GM12878 (cell line): ENCODE measurements at regions of chr2 and their contacts with region 1.

Region 1: DNA sequence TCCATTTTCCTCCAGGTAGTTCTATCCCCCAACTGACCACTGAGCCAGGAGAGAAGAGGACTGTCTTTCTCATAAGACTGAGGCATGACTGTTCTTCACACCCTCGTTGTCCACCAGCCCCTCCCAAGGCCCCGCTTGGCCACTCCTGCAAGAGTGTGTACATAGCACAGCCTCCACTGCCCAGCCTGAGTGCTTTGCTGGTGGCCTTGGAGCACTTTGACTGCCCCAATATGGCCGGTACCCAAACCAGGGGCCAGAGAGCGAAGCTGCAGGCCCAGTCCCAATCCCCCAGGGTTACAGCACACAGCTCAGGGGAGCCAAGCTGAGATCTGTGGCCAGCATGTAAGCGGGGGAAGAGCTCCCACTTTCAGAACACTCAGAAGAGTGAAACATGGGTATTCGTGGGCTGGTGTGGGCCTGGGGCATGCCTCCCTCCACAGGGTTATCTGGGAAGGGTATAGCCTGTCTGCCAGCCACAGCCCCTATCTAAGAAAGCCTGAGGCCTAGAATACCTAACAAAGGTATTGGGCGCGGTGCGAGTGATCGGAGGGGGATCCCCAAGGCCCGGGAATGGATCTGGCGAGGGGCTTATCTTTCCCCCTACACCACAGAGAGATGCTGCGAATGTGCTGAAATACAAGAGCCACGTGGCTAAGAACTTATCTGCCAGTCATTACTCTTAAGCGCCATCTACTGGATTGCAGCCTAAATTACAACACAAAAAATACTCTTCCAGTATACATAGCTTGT is 163.8 kb downstream of the WDPCP start:
- DNase-seq: no peak
- ATAC-seq: peak; percentile 87
- H3K4me3 ChIP-seq: no peak overlapping the region
- H3K27ac ChIP-seq: no peak overlapping the region
- H3K4me1 ChIP-seq: no peaks in the 10 kb centered on the region
- H3K27me3 ChIP-seq: no peaks in the 10 kb centered on the region
- CTCF ChIP-seq: peak; percentile 43 to 66 (median 54)
- EP300 ChIP-seq: no peak
- POLR2A ChIP-seq: no peak
- RAD21 ChIP-seq: peak; percentile 79

Region 2: DNA sequence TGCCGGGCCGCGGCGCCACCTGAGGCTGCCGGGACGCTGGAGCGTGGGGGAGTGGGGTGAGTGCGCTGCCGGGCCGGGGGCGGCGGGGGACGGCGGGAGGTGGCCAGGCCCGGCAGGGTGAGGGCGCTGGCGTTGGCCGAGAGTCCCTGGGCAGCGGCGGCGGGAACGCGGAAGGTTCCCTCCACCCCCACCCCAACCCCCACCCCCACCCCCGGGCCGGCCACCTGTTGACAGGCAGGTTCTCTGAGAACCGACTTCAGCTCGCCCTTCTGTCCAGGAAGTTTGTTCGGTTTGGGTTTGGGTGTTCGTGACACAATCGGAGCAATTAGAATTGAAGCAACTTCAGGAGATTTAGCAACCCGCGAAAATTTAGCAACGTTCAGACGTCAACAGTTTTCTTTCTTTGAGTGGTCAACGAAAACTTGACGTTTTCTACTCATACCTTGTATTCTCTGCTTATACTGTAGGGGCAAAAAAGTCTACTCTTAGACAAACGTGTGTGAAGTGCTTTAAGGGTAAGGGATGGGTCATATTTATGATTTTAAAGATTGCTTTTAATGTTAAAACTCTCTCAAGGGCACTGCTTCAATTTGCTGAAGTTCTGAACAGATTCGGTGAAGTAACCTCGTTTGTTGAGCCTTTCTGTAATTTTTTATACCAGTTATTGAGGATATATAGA is 364.6 kb before region 1 on chr2:
- CTCF ChIA-PET with region 1: no interaction called
- POLR2A ChIA-PET with region 1: no interaction called
- RAD21 ChIA-PET with region 1: no interaction called
- SMC1A ChIA-PET with region 1: no interaction called
- in situ Hi-C with region 1: no loop called
- intact Hi-C with region 1: loop called (anchors 10 kb)
- DNase-seq: no peak
- ATAC-seq: peak; percentile 62
- H3K4me3 ChIP-seq: 0 out of 2 replicates have a peak overlapping the region, but pooled peaks have one; percentile 31
- H3K27ac ChIP-seq: no peak overlapping the region
- H3K4me1 ChIP-seq: peaks cover 9% of the 10 kb centered on the region; the same call in 1 of the 2 replicates
- H3K27me3 ChIP-seq: peaks cover 5 to 15% of the 10 kb centered on the region in 2 experiments
- CTCF ChIP-seq: no peak
- EP300 ChIP-seq: no peak
- POLR2A ChIP-seq: no peak
- RAD21 ChIP-seq: no peak

Region 3: GRCh38 chr2:63300835-63301234 is 123.7 kb before region 1 on chr2:
- CTCF ChIA-PET with region 1: no interaction called
- POLR2A ChIA-PET with region 1: no interaction called
- RAD21 ChIA-PET with region 1: no interaction called
- SMC1A ChIA-PET with region 1: no interaction called
- in situ Hi-C with region 1: no loop called
- intact Hi-C with region 1: no loop called
- DNase-seq: no peak
- ATAC-seq: no peak
- H3K4me3 ChIP-seq: no peak overlapping the region
- H3K27ac ChIP-seq: no peak overlapping the region
- H3K4me1 ChIP-seq: no peaks in the 10 kb centered on the region
- H3K27me3 ChIP-seq: no peaks in the 10 kb centered on the region
- CTCF ChIP-seq: no peak
- EP300 ChIP-seq: no peak
- POLR2A ChIP-seq: no peak
- RAD21 ChIP-seq: 0 out of 2 replicates have a peak, but pooled peaks have one; percentile 11

Region 4: GRCh38 chr2:63436488-63436887 is 12.0 kb after region 1 on chr2:
- CTCF ChIA-PET with region 1: interaction called, 13 read pairs
- POLR2A ChIA-PET with region 1: no interaction called
- RAD21 ChIA-PET with region 1: no interaction called
- SMC1A ChIA-PET with region 1: interaction called, 5 read pairs
- in situ Hi-C with region 1: no loop called
- intact Hi-C with region 1: no loop called
- DNase-seq: no peak
- ATAC-seq: no peak
- H3K4me3 ChIP-seq: no peak overlapping the region
- H3K27ac ChIP-seq: no peak overlapping the region
- H3K4me1 ChIP-seq: no peaks in the 10 kb centered on the region
- H3K27me3 ChIP-seq: no peaks in the 10 kb centered on the region
- CTCF ChIP-seq: no peak
- EP300 ChIP-seq: no peak
- POLR2A ChIP-seq: no peak
- RAD21 ChIP-seq: no peak

Region 5: DNA sequence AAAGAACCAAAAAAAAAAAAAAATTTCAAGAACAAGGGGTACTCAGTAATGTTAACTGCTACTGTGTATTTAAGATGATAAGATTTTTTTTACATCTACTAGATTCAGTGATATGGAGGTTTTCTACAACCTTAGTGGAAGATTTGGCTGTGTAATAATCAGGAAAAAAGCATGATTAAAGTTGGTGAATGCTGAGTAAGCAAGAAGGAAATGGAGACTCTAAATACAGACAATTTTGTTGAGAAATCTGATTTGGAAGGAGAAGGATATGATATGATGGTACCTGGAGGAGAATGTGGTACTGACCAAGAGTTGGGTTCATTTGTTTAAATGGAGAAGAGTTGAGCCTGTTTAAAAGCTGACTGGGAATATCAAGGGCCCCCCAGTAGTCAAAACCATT is 38.6 kb after region 1 on chr2:
- CTCF ChIA-PET with region 1: no interaction called
- POLR2A ChIA-PET with region 1: no interaction called
- RAD21 ChIA-PET with region 1: no interaction called
- SMC1A ChIA-PET with region 1: no interaction called
- in situ Hi-C with region 1: no loop called
- intact Hi-C with region 1: no loop called
- DNase-seq: no peak
- ATAC-seq: no peak
- H3K4me3 ChIP-seq: no peak overlapping the region
- H3K27ac ChIP-seq: no peak overlapping the region
- H3K4me1 ChIP-seq: no peaks in the 10 kb centered on the region
- H3K27me3 ChIP-seq: no peaks in the 10 kb centered on the region
- CTCF ChIP-seq: no peak
- EP300 ChIP-seq: no peak
- POLR2A ChIP-seq: no peak
- RAD21 ChIP-seq: no peak